ENCODE measurements at regions of chr12 and their contacts with region 1.

Region 1: GRCh38 chr12:70719672-70720420 is 82.6 kb upstream of the PTPRB start:
- DNase-seq: peak; percentile 62
- ATAC-seq: no peak

Region 2: GRCh38 chr12:70242695-70243509 is 476.9 kb before region 1 on chr12 and contains the start of gene CNOT2:
- intact Hi-C with region 1: loop called (anchors 10 kb)
- DNase-seq: peak; percentile 92
- ATAC-seq: peak; percentile 97
- total RNA-seq, gene CNOT2: 36.5 TPM

Region 3: GRCh38 chr12:70590051-70590450 is 129.8 kb before region 1 on chr12:
- intact Hi-C with region 1: loop called (anchors 2 kb)
- DNase-seq: peak; percentile 74
- ATAC-seq: peak; percentile 48

Region 4: GRCh38 chr12:70645494-70646317 is 74.1 kb before region 1 on chr12:
- intact Hi-C with region 1: loop called (anchors 5 kb)
- DNase-seq: peak; percentile 62
- ATAC-seq: peak; percentile 72

Region 5: DNA sequence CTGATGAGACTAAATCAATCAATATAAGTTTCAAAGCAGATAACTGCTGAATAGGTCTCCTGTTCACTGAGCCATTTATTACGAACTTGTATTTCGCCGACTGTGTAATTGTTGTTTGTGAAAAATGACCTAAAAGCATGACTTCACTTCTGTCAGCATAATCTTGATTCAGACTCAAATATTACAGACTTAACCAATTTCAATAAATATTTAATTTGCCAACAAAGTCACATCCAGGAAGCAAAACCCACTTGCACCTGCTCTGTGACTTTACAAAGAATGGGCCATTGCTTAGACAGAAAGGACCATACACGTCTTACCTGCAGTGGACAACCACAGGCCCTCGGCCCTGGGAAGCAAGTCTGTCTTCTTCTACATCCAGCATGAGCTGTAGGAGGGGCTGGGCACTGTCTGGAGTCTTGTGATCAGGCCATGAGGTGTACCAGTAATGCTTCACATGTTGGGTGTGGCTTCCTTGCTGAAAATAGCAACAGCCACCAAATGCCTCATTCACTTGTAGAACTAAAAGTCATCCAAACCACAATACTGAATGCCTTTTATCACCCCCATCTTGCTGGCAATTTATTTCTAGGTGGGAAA is 59.1 kb before region 1 on chr12:
- intact Hi-C with region 1: no loop called
- DNase-seq: peak; percentile 58
- ATAC-seq: peak; percentile 48